PC-9 (cell line): ENCODE measurements at regions of chr12 and their contacts with region 1.

Region 1: DNA sequence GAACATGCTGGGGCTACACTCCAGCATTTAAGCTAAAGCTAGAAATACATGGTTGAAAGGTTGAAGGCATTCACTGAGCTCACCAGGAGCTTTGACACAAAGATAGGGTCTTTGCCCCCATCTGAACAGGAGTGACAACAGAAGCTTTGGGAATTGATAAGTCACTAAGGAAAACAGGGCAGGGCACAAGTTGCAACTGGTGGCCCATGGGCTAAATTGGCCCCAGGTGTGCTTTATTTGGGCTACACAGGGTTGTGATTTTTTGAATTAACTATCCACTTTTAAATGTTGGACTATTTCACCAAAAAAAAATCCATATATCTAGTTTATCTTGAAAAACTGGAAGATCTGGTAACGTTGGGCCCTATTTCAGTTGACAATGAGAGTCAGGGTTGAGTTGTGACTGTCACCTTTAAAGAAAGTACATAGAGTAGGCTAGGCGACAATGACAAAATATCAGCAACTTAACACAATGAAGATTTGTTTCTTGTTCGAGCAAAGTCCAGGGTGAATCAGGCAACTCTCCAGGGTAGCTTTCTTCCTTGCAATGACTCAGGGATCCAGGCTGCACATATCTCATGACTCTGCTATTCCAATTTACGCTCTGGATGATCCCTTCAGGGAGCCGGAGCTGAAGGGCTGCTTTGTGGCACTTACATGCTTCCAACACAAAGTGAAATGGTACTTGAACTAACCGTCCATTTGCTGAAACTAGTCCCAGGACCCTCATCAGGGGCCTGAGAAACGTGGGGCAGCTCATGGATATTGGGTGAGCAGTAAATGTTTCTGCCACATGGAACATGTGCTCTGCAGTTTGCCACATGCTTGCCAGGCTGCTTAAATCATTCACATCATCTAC is 13.3 kb upstream of the EIF4B start:
- DNase-seq: peak; percentile 43 to 85
- H3K4me3 ChIP-seq: peak overlapping the region; percentile 18; the same call in 1 of the 2 replicates
- H3K27ac ChIP-seq: peak overlapping the region; percentile 90
- H3K4me1 ChIP-seq: peaks cover 35% of the 10 kb centered on the region
- H3K27me3 ChIP-seq: no peaks in the 10 kb centered on the region
- CTCF ChIP-seq: no peak

Region 2: DNA sequence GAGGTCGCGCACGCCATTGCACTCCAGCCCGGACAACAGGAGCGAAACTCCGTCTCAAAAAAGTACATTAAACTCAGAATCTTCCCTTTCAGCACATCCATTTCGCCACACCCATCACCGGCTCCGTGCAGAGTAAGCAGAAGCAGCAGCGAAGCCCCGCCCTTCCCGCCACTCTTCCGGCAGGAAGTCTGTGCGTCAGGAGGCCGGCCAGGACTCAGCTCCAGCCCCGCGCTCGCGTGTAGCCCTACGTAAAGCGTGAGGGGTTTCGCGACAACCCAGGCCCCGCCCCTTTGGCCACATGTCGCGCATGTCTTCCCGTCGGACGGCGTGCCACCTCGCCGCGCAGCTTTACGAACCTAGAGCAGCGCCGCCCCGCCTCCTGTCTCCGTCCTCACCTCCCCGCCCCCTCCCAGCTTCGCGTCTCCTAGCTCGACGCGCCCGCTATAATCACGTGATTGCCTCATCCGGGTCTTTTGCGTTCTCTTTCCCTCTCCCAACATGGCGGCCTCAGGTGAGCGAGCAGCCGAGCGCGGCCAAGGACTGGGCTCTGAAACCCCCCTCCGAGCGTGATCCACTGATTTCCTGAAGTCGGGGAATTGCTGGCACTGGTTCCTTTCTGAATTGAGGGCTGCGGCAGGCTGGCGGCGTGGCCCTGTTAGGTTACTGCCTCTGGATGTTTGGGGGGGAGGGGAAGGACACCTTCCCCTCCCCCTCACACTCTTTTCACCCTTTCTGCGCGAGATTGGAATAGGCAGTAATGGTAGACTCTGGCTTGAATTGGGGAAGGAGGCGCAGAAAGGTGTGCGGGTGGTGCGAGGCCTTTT is 13.3 kb after region 1 on chr12 and contains the start of gene EIF4B:
- CTCF ChIA-PET with region 1: interaction called, 9 read pairs
- POLR2A ChIA-PET with region 1: interaction called, 10 read pairs
- intact Hi-C with region 1: no loop called
- DNase-seq: peak; percentile 97 to 99
- H3K4me3 ChIP-seq: peak within 1 kb of the TSS; percentile 82
- H3K27ac ChIP-seq: peak within 1 kb of the TSS; percentile 92
- H3K4me1 ChIP-seq: peaks cover 48% of the 10 kb centered on the region
- H3K27me3 ChIP-seq: no peaks in the 10 kb centered on the region
- CTCF ChIP-seq: 0 out of 2 replicates have a peak, but pooled peaks have one; percentile 9
- total RNA-seq, gene EIF4B: 531 and 615 TPM in 2 replicates